Transverse colon (tissue), 4 donors: ENCODE measurements at regions of chr6 and their contacts with region 1.

Region 1: GRCh38 chr6:35739645-35740524 is 3.1 kb downstream of the ARMC12 start:
- DNase-seq: no peak
- H3K4me3 ChIP-seq: no peak overlapping the region
- H3K27ac ChIP-seq: peak overlapping the region; percentile 2 to 50 (median 16)
- H3K4me1 ChIP-seq: peaks cover 4 to 34% (median 21%) of the 10 kb centered on the region in 4 donors
- H3K27me3 ChIP-seq: no peaks in the 10 kb centered on the region
- CTCF ChIP-seq: peak in 2 of 5 experiments; percentile 28 to 32
- EP300 ChIP-seq: no peak
- POLR2A ChIP-seq: no peak

Region 2: GRCh38 chr6:34834789-34835518 is 904.9 kb before region 1 on chr6:
- in situ Hi-C with region 1: no loop called
- intact Hi-C with region 1: no loop called
- DNase-seq: no peak
- H3K4me3 ChIP-seq: no peak overlapping the region
- H3K27ac ChIP-seq: peak overlapping the region in 1 of 4 donors; percentile 17
- H3K4me1 ChIP-seq: no peaks in the 10 kb centered on the region
- H3K27me3 ChIP-seq: no peaks in the 10 kb centered on the region
- CTCF ChIP-seq: no peak
- EP300 ChIP-seq: no peak
- POLR2A ChIP-seq: no peak

Region 3: GRCh38 chr6:35522660-35523658 is 216.9 kb before region 1 on chr6:
- in situ Hi-C with region 1: loop called in 3 of 4 experiments (anchors 5 kb)
- intact Hi-C with region 1: no loop called
- DNase-seq: peak; percentile 74
- H3K4me3 ChIP-seq: no peak overlapping the region
- H3K27ac ChIP-seq: no peak overlapping the region
- H3K4me1 ChIP-seq: peaks cover 0 to 4% (median 0%) of the 10 kb centered on the region in 4 donors
- H3K27me3 ChIP-seq: no peaks in the 10 kb centered on the region
- CTCF ChIP-seq: peak; percentile 93 to 99 (median 99)
- EP300 ChIP-seq: no peak
- POLR2A ChIP-seq: no peak